OCI-LY7 (cell line): ENCODE measurements at regions of chr7 and their contacts with region 1.

Region 1: GRCh38 chr7:148698397-148699023 is at the start of gene CUL1:
- DNase-seq: peak; percentile 84
- H3K4me3 ChIP-seq: peak within 1 kb of the TSS; percentile 83
- H3K27ac ChIP-seq: peak within 1 kb of the TSS; percentile 69
- H3K4me1 ChIP-seq: peaks cover 32% of the 10 kb centered on the region
- CTCF ChIP-seq: no peak
- total RNA-seq, gene CUL1: 36.7 and 40.5 TPM in 2 replicates

Region 2: GRCh38 chr7:148276314-148277041 is 422.0 kb before region 1 on chr7:
- CTCF ChIA-PET with region 1: no interaction called
- POLR2A ChIA-PET with region 1: no interaction called
- intact Hi-C with region 1: no loop called
- DNase-seq: peak; percentile 31
- H3K4me3 ChIP-seq: no peak overlapping the region
- H3K27ac ChIP-seq: no peak overlapping the region
- H3K4me1 ChIP-seq: peaks cover 14% of the 10 kb centered on the region
- CTCF ChIP-seq: no peak

Region 3: DNA sequence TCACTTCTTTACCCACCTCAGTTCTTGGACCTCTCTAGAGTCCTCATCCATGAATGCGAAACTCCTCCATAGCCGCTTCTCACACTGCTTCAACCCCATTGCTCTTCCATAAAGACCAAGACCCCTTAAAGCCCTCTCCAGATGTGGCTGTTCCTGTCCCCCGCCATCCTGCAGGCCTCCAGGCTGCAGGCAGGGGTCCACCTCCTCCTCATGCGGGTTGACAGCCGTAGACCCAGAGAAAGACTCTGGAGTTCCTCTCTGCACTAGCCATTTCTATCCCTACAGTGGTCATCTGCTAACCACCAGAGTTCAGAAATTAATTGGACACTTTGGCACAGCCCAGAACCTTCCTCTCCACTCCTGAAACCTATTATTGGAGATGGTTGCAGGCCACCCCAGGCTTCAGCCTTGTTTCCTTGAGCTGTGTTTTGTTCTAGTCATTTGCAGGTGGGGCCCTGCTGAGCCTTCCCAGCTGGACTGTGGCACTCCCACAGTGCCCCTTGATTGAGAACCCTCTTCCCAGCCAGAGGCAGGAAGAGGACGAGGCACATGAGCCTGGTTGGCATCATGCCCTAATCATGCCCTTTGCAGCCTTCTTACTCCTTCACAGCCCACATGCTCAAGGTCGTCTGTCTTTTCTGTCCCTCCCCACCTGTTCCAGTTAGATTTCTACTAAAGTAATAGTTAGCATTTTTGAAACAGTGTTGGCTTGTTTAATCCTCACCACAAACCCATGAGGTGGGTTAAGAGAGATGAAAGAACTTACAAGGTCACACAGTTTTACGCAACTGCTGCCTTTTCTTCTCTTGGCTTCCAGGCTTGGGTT is 24.0 kb after region 1 on chr7:
- CTCF ChIA-PET with region 1: no interaction called
- POLR2A ChIA-PET with region 1: interaction called, 36 read pairs
- intact Hi-C with region 1: no loop called
- DNase-seq: no peak
- H3K4me3 ChIP-seq: no peak overlapping the region
- H3K27ac ChIP-seq: no peak overlapping the region
- H3K4me1 ChIP-seq: peaks cover 13% of the 10 kb centered on the region
- CTCF ChIP-seq: no peak